GM12878 (cell line): ENCODE measurements at regions of chr6 and their contacts with region 1.

Region 1: GRCh38 chr6:106085984-106086813 is at the start of gene PRDM1:
- DNase-seq: peak; percentile 78
- ATAC-seq: peak; percentile 77
- H3K4me3 ChIP-seq: peak within 1 kb of the TSS; percentile 70
- H3K27ac ChIP-seq: peak within 1 kb of the TSS; percentile 78
- H3K4me1 ChIP-seq: peaks cover 23% of the 10 kb centered on the region
- H3K27me3 ChIP-seq: peaks cover 0 to under 1% of the 10 kb centered on the region in 2 experiments; a peak in 2 of 4 replicates
- CTCF ChIP-seq: peak; percentile 35 to 41 (median 41); a peak in 4 of 6 replicates
- EP300 ChIP-seq: no peak
- POLR2A ChIP-seq: peak; percentile 82
- RAD21 ChIP-seq: peak; percentile 38
- polyA plus RNA-seq, gene PRDM1: 1.9 to 2.8 TPM

Region 2: GRCh38 chr6:105646391-105646867 is 439.8 kb before region 1 on chr6:
- CTCF ChIA-PET with region 1: no interaction called
- POLR2A ChIA-PET with region 1: no interaction called
- RAD21 ChIA-PET with region 1: interaction called, 6 read pairs
- SMC1A ChIA-PET with region 1: interaction called, 6 read pairs
- in situ Hi-C with region 1: no loop called
- intact Hi-C with region 1: loop called (anchors 5 kb)
- DNase-seq: peak; percentile 100
- ATAC-seq: peak; percentile 91
- H3K4me3 ChIP-seq: 0 out of 2 replicates have a peak overlapping the region, but pooled peaks have one; percentile 22
- H3K27ac ChIP-seq: peak overlapping the region; percentile 72
- H3K4me1 ChIP-seq: peaks cover 51% of the 10 kb centered on the region
- H3K27me3 ChIP-seq: no peaks in the 10 kb centered on the region; a peak in 1 of 4 replicates
- CTCF ChIP-seq: no peak
- EP300 ChIP-seq: peak; percentile 100
- POLR2A ChIP-seq: 0 out of 2 replicates have a peak, but pooled peaks have one; percentile 25
- RAD21 ChIP-seq: peak; percentile 32; the same call in 1 of the 2 replicates

Region 3: DNA sequence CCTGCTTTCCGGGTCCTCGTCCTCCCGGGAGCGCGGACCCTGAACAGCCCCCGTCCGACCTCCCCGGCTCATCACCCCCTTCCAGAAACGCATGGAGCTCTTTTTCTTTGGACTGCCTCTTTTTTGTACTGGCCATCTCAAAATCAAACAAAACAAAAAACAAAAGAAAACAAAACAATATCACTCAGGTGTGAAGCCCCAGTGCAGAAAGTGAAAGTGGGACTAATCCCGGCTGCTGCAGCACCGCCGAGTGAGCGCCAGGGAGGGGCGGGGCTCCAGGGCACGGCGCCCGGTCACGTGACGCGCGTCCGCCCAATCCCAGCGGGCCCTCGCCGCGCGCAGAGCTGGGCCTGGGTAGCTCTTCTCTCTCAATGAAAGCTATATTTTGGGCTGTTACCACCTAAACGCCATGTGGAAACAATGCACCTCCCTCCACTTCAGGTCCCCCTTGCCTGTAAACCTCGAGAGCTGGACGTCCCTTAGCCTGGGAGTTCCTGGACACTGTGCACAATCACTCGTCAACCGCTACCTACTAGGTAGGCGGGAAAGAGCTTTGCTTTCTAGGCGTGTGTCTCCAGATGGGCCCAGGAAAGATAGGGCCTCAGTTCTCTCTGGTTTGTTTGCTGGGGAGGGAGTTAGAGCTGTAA is 93.8 kb before region 1 on chr6:
- CTCF ChIA-PET with region 1: interaction called, 5 read pairs
- POLR2A ChIA-PET with region 1: no interaction called
- RAD21 ChIA-PET with region 1: interaction called, 10 read pairs
- SMC1A ChIA-PET with region 1: interaction called, 7 read pairs
- in situ Hi-C with region 1: no loop called
- intact Hi-C with region 1: no loop called
- DNase-seq: peak; percentile 45
- ATAC-seq: peak; percentile 98
- H3K4me3 ChIP-seq: peak overlapping the region; percentile 79
- H3K27ac ChIP-seq: no peak overlapping the region
- H3K4me1 ChIP-seq: peaks cover 5% of the 10 kb centered on the region; the same call in 1 of the 2 replicates
- H3K27me3 ChIP-seq: peaks cover 12 to 22% of the 10 kb centered on the region in 2 experiments
- CTCF ChIP-seq: no peak
- EP300 ChIP-seq: no peak
- POLR2A ChIP-seq: no peak; the same call in 1 of the 2 replicates
- RAD21 ChIP-seq: no peak

Region 4: GRCh38 chr6:106163446-106163965 is 77.3 kb after region 1 on chr6:
- CTCF ChIA-PET with region 1: interaction called, 14 read pairs
- POLR2A ChIA-PET with region 1: interaction called, 8 read pairs
- RAD21 ChIA-PET with region 1: interaction called, 16 read pairs
- SMC1A ChIA-PET with region 1: interaction called, 16 read pairs
- in situ Hi-C with region 1: no loop called
- intact Hi-C with region 1: no loop called
- DNase-seq: peak; percentile 69
- ATAC-seq: peak; percentile 52
- H3K4me3 ChIP-seq: peak overlapping the region; percentile 13; the same call in 1 of the 2 replicates
- H3K27ac ChIP-seq: peak overlapping the region; percentile 97
- H3K4me1 ChIP-seq: peaks cover 64% of the 10 kb centered on the region
- H3K27me3 ChIP-seq: no peaks in the 10 kb centered on the region
- CTCF ChIP-seq: peak in 2 of 3 experiments; percentile 22 to 23; a peak in 2 of 6 replicates
- EP300 ChIP-seq: no peak
- POLR2A ChIP-seq: no peak
- RAD21 ChIP-seq: no peak

Region 5: DNA sequence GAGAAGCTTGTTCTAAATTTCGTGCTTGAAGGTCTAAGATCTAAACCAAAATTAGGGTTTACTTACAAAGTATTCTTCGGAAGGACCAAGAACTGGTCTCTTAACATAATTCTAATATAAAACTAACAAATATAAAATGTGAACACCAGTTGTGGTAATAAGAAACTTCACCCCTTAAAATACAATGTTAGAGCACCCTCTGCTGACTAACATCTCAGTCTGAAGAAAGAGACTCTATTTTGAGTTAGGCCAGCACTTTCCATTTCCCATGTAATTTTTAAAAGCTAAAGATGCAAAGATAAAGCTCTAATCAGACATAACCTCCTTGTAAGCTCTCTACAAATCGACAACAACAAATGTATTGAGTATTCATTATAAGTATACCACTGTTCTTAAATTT is 214.7 kb after region 1 on chr6:
- CTCF ChIA-PET with region 1: interaction called, 48 read pairs
- POLR2A ChIA-PET with region 1: no interaction called
- RAD21 ChIA-PET with region 1: interaction called, 9 read pairs
- SMC1A ChIA-PET with region 1: interaction called, 24 read pairs
- in situ Hi-C with region 1: loop called (anchors 10 kb)
- intact Hi-C with region 1: loop called (anchors 1 kb)
- DNase-seq: peak; percentile 12
- ATAC-seq: peak; percentile 61
- H3K4me3 ChIP-seq: no peak overlapping the region
- H3K27ac ChIP-seq: no peak overlapping the region
- H3K4me1 ChIP-seq: no peaks in the 10 kb centered on the region
- H3K27me3 ChIP-seq: no peaks in the 10 kb centered on the region
- CTCF ChIP-seq: peak; percentile 23 to 56 (median 41); a peak in 4 of 6 replicates
- EP300 ChIP-seq: no peak
- POLR2A ChIP-seq: no peak
- RAD21 ChIP-seq: peak; percentile 68